Right ventricle myocardium inferior (tissue), 1 donor: ENCODE measurements at regions of chr18 and their contacts with region 1.

Region 1: DNA sequence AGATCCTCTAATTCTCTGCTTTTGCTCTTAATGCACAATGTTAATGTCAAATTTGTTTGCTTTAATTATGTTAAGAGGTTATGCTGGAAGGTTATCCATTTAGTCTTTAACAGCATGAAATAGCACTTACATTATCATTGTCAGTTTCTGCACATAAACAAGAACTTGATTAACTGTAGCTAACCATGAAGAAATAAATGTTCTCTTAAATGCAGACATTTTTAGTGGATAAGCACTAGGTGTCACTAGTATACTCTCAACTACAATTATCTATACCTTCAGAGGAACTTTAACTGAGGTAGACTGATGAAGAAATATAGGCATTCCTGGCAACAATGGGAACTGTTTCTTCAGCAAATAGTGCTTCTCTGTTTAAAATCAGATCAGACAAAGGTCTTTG is 178.8 kb upstream of the CHST9 start:
- DNase-seq: no peak
- ATAC-seq: no peak

Region 2: DNA sequence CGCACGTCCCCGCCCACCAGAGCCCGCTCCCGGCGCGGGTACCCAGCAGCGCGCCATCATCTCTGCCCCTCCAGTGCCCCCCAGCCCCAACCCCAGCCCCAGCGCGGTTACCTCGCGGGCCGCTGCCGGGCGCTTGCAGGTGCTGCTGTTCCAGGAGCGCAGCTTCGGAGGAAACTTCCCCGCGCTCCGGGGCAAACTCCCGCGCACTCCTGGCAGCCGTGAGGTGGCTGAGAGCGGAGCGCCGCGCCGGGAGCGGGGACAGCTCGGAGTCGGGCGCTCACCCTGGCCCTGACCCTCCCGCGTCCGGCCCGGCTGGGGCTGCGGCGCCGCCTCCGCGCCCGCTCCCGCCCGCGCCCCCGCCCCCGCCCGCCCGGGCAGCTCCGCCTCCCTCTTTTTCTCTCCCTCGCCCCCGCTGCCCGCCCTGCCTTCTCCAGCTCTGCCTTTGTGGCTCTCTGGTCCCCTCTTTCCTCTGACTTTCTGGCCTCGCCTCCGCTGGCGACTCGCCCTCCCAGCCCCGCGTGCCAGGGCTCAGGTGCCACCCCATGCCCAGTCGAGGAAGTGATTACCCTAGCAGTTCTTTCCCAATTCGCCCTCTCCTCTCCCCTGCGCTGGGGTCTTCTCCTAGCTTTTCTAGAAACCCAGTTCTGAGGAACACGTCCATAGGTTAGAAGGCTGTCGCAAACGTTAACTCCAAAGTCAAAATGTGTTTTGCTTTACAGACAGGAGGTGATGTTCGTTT is 178.7 kb before region 1 on chr18 and contains the start of gene CHST9:
- intact Hi-C with region 1: no loop called
- DNase-seq: peak; percentile 59
- ATAC-seq: peak; percentile 86
- total RNA-seq, gene CHST9: 8.3 TPM

Region 3: GRCh38 chr18:27599202-27599829 is 235.4 kb after region 1 on chr18:
- intact Hi-C with region 1: loop called (anchors 2 kb)
- DNase-seq: no peak
- ATAC-seq: no peak